Ascending aorta (tissue), 2 donors: ENCODE measurements at regions of chr11 and their contacts with region 1.

Region 1: DNA sequence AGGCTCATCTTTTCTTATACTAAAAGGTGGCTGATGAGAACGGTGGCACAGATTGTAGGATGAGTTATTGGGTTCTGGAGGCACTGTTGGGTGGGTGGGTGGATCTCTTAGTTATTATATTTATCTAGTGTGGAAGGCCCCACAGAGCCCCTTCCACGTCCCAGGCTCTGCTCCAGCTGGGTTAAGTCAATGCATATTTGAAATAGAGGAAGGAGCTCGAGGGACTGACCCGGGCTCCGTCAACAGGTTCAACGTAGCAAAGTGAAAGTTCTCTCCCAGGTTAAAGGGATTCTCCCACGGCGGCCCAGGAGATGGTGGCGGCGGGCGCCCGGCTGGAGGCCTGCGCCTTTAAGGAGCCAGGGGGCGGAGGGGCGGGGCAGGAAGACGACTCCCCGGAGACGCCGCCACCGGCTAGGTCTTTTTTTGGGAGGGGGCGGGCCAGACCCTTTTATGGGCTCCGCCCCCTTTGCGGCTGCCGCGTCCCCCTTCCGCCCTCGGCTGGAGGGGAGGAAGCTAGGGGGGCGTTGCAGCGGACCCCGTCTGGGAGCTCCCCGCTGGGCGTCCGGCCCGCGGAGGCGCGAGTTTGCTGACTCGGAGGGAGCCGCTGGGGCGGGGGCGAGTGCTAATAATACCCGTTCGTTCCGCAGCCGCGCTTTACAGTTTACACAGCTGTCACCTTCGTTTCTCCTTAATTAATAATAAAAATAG is 1.5 kb upstream of the INPPL1 start:
- DNase-seq: peak; percentile 80 to 97
- H3K4me3 ChIP-seq: peak overlapping the region; percentile 93 to 99
- H3K27ac ChIP-seq: peak overlapping the region; percentile 96 to 97
- H3K4me1 ChIP-seq: peaks cover 6 to 18% of the 10 kb centered on the region in 2 donors
- H3K27me3 ChIP-seq: no peaks in the 10 kb centered on the region
- CTCF ChIP-seq: peak; percentile 17 to 24 (median 18)

Region 2: DNA sequence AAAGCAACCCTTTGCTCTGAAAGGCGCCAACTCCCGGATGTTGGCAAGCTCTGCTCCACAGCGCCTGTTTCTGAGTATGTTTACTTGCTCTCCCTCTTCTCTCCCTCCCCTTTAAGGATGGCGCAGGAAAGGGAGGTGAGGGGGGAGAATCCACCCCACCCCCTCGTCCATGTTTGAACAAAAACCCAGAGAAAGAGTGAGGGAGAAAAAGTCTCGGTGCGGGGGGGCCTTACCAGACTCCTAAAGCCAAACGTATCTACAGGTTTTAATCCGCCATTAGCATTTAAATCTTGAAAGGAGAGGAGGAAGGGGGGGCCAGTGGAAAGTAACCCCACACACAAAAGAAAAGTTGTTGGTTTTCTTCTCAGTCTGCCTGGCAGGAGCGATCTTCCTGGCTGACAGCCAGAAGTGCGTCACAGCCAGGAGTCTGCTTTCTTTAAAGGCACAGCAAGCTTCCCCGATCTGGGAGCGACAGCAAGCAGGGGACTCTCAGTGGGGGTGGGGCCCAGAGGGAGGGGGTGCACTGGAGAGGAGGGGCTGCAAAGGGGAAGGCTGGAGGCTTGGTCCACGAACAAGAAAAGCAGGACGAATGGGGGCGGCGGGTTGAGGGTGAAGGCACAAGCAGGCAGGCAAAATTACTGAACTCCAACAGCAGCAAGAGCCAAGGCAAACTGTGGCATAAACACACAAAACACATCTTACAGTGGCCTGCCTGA is 182.2 kb before region 1 on chr11:
- intact Hi-C with region 1: loop called (anchors 5 kb)
- DNase-seq: peak; percentile 82 to 97
- H3K4me3 ChIP-seq: peak overlapping the region; percentile 59 to 68
- H3K27ac ChIP-seq: peak overlapping the region; percentile 97
- H3K4me1 ChIP-seq: peaks cover 8 to 48% of the 10 kb centered on the region in 2 donors
- H3K27me3 ChIP-seq: no peaks in the 10 kb centered on the region
- CTCF ChIP-seq: no peak

Region 3: GRCh38 chr11:72112321-72113219 is 110.5 kb before region 1 on chr11 and contains the start of gene ANAPC15:
- intact Hi-C with region 1: loop called (anchors 2 kb)
- DNase-seq: peak; percentile 98 to 100
- H3K4me3 ChIP-seq: peak within 1 kb of the TSS; percentile 69 to 77
- H3K27ac ChIP-seq: peak within 1 kb of the TSS; percentile 95 to 97
- H3K4me1 ChIP-seq: peaks cover 3 to 10% of the 10 kb centered on the region in 2 donors
- H3K27me3 ChIP-seq: no peaks in the 10 kb centered on the region
- CTCF ChIP-seq: no peak
- total RNA-seq, gene ANAPC15: not detected

Region 4: GRCh38 chr11:72245263-72245816 is 22.3 kb after region 1 on chr11:
- intact Hi-C with region 1: no loop called
- DNase-seq: peak in 1 of 2 donors; percentile 56
- H3K4me3 ChIP-seq: no peak overlapping the region
- H3K27ac ChIP-seq: no peak overlapping the region
- H3K4me1 ChIP-seq: peaks cover 6 to 11% of the 10 kb centered on the region in 2 donors
- H3K27me3 ChIP-seq: peaks cover 25% of the 10 kb centered on the region
- CTCF ChIP-seq: no peak

Region 5: DNA sequence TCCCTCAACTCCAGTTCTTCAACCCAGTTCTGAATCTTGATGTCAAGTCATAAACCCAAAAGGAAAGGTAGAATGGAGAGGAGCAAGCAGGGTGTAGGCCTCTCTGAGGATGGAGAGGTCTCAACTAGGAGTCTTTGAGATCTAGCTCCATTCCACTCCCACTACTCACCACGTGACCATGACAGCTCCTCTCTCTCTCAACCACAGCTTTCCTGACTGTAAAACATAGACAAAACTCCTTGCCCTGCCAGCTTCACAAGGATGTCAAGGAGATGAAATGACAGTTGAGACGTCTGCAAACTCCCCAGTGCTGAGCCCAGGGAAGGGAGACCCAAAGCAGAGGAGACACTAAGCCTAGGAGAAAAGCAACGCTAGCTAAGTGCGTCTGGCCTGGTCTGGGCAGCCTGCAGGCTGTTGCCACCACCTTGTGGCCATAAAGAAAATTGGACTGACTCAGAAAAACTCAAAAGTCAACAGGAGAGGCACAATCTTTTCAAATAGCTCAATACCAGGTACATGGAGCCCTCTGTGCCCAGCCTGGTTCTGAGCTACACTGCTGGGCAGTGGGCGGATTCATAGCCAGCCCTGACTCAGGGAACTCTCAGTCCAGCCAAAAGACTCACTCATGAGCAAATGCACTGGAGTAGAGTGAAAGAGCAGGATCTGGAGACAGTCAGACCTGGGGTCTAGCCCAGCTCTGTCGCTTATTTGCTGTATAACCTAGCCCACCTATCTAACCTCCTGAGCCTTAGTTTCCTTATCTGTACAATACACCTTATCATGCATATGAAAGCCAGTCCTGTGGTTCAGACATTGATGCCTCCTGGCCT is 207.9 kb after region 1 on chr11:
- intact Hi-C with region 1: loop called (anchors 2 kb)
- DNase-seq: no peak
- H3K4me3 ChIP-seq: no peak overlapping the region
- H3K27ac ChIP-seq: no peak overlapping the region
- H3K4me1 ChIP-seq: peaks cover 0 to 13% of the 10 kb centered on the region in 2 donors
- H3K27me3 ChIP-seq: no peaks in the 10 kb centered on the region
- CTCF ChIP-seq: peak; percentile 51 to 69 (median 56)

Region 6: DNA sequence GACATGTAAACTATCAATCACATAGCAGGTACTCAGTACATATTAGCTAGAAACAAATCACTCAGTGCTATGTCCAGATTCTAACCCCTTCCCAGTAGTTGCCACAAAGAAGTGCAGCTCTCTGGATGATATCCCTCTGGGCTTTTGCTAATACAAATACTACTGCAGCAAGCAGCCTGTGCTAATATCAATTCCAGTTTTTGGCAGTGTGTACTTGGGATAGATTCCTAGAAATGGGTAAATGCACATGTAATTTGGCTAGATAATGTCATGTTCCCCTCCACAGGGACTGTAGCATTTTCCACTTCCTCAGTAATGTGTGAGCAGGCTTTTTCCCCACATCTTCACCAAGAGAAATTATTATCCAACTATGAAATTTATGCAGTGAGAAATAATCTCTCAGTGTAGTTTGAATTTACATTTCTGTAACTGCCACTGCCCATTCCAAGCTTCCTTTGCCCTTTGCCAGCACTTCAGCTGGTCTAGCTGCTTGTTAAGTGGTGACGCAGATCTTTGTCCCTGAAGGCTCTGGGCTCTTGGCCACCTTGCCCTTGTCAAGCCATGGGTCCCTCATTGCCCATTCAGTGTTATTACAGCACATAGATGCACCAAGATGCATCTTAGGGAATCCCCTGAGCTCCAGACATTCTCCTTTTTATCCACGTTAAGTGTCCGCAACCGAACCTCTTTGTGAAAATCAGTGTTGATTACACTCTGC is 318.4 kb after region 1 on chr11:
- intact Hi-C with region 1: no loop called
- DNase-seq: no peak
- H3K4me3 ChIP-seq: no peak overlapping the region
- H3K27ac ChIP-seq: no peak overlapping the region
- H3K4me1 ChIP-seq: no peaks in the 10 kb centered on the region
- H3K27me3 ChIP-seq: no peaks in the 10 kb centered on the region
- CTCF ChIP-seq: no peak

Region 7: GRCh38 chr11:72724851-72725730 is 502.0 kb after region 1 on chr11:
- intact Hi-C with region 1: no loop called
- DNase-seq: peak in 1 of 2 donors; percentile 82
- H3K4me3 ChIP-seq: no peak overlapping the region
- H3K27ac ChIP-seq: no peak overlapping the region
- H3K4me1 ChIP-seq: peaks cover 13 to 17% of the 10 kb centered on the region in 2 donors
- H3K27me3 ChIP-seq: no peaks in the 10 kb centered on the region
- CTCF ChIP-seq: peak; percentile 74 to 91 (median 87)